Posterior vena cava (tissue), 2 donors: ENCODE measurements at regions of chr2 and their contacts with region 1.

Region 1: GRCh38 chr2:177164584-177165052 is 48.0 kb upstream of the HNRNPA3 start:
- DNase-seq: peak; percentile 90

Region 2: DNA sequence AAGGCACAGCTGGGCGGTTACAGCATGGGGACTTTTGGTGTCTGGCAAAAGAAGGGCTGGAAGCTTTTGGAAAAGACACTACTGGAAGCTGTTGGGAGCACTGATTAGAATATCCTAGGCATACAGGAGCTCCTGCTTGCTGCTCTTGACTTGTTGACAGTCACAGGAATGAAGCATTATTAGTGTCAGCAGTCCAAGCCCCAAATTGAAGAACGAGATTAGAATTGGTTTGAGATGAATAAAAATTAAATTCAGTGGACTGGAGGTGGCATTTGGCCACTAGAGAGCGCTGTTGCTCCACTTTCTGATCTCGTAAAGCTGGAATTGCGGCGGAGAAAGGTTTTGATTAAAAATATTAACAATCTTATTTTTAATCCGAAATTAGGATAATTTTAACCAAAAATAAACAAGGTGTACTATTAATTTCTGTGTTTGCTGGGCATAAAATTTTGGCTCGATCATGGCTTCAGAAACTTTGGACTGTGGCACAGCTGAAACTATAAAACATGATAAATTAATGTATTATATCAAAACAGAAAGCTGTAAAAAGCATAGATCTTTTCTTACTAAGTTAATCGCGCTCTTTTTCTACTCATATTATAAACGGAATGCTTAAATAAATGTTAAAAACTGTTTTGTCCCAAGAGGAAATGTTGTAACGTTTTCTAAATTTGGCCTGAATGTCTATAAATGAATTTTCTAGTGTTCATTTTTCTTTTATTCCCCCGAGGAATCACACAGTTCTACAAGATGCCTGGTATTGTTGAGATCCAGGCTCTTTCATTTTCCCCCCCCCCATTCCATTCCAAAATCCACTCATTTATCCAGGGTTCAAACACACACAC is 1037.5 kb before region 1 on chr2:
- intact Hi-C with region 1: loop called in 1 of 2 experiments (anchors 5 kb)
- DNase-seq: no peak

Region 3: GRCh38 chr2:177263451-177264208 is 99.0 kb after region 1 on chr2:
- intact Hi-C with region 1: loop called in 1 of 2 experiments (anchors 10 kb)
- DNase-seq: peak; percentile 99

Region 4: DNA sequence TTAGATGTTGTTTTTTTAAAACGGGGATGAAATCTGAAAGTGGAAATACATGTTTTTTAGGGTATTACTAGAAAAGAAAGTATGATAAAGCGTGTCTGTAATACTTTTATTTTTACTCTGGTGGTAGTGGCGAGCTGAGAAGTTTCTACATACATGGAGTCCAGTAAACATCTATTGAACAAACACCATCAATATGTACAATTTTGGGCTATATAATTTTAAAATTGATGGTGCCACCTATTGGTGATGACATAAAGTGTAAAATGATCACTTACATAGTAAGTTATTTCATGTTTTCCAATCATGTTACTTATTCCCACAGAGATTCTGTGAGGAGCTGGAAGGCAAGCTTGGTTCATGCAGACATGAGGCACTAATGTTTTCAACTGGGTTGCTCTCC is 131.4 kb after region 1 on chr2:
- intact Hi-C with region 1: loop called in 1 of 2 experiments (anchors 10 kb)
- DNase-seq: no peak

Region 5: GRCh38 chr2:177325270-177325929 is 160.8 kb after region 1 on chr2:
- intact Hi-C with region 1: loop called in 1 of 2 experiments (anchors 10 kb)
- DNase-seq: no peak

Region 6: DNA sequence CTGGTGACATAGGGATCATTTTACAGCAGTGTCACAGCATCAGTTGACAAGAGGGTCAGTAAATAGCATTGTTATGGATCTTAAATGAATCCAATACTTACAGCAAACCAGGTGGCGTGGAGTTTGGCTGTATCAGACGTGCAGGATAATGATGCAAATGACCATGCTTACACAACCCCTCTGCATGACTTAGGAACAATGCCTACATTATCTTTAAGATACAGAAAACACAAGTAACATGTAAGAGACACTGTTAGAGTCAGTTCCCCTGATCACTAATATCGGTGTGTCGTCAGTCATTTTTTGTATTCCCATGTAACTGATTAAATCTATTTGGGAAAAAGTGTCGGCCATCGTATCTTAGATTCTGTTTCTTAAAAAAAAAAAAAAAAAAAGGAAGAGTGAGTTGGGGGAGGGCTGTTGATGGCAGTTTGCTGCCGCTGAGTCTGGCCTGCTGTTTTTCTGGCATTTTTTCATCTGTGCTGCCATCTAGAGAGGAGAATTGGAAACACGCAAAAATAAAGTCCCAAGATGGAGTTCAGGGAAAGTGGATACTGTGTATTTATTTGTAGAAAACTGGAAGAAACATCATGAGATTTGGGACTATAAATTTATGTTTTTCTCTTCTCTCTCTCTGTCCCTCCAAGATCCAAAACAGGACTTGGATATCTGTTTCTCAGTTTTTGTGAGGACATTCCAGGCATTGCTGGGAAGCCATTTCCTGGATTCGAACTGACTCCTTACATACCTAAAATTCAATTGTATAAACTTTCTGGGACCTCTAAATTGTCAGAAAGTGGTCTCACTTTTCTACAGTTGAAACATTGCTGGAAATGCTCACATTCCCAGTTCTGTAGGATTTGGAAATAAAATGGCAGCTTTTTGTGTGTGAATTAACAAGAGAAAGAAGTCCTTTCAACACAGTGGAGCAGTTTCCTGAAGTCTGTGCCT is 167.7 kb after region 1 on chr2:
- intact Hi-C with region 1: loop called (anchors 2 to 10 kb)
- DNase-seq: no peak

Region 7: DNA sequence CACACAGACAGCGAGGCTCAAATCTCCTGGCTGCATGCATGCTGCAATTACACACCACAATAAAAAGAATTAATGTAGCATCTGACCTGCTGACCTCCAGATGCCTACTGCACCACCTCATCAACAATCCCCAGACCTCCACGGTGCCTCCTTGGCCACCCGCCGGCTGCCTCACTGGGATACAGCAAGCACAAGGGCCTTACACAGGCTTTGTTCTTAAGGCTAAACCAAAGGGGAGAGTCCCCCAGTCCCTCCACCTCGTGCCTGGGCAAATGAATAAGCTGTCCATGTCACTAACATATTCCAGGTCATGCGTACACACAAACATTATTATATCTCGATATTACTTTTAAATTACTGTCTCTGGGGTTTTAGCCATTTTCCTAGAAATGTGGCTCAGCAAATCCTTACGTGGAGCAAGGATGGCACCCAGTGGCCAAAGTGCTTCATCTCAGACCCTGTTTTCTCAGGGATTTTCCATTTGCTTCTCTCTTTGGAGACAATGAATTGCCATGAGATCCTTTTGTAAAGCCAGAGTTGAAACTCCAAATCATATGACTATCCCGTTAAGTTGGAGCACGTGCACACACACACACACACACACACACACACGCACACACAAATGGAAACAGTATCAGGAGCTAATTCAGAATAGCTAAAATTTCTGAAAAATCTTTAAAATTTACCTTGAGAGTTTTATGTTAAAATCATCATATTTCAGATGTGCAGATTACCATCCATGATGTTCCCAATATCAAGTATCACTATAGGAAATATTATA is 594.2 kb after region 1 on chr2:
- intact Hi-C with region 1: loop called in 1 of 2 experiments (anchors 10 kb)
- DNase-seq: no peak